CD4-positive, alpha-beta memory T cell (primary cell): ENCODE measurements at regions of chr11 and their contacts with region 1.

Region 1: DNA sequence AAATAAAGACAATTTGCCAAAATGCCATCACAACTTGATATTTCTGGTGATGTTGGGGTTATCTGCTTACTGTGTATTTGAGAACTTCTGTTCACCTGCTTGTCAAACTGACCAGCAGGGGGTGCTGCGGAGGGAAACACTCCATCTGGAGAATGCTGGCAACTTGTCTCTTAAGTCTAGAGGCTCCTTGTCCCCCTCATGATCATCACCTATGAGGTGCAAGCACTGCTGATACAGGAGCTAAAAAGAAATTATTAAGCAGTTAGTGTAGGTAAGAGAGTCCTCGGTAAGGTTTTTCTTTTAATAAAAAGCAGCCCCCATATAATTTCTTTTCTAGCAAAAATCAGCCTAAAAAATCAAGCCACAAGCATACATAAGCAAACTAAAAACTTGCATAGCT is 32.7 kb upstream of the GLYATL1B start:
- DNase-seq: peak; percentile 63 to 77 (median 71)
- H3K4me3 ChIP-seq: no peak overlapping the region
- H3K4me3 Mint-ChIP-seq: no peak overlapping the region
- H3K27ac ChIP-seq: no peak overlapping the region
- H3K27ac Mint-ChIP-seq: no peak overlapping the region
- H3K4me1 ChIP-seq: peaks cover 6% of the 10 kb centered on the region
- H3K4me1 Mint-ChIP-seq: peaks cover 4 to 7% (median 5%) of the 10 kb centered on the region in 4 donors
- H3K27me3 ChIP-seq: no peaks in the 10 kb centered on the region
- H3K27me3 Mint-ChIP-seq: peaks cover 14 to 25% of the 10 kb centered on the region in 2 donors

Region 2: GRCh38 chr11:58579192-58580129 is 473.9 kb before region 1 on chr11:
- CTCF ChIA-PET with region 1: no interaction called
- POLR2A ChIA-PET with region 1: no interaction called
- intact Hi-C with region 1: no loop called
- DNase-seq: peak; percentile 89 to 94 (median 90)
- H3K4me3 ChIP-seq: peak overlapping the region; percentile 63 to 81
- H3K4me3 Mint-ChIP-seq: peak overlapping the region; percentile 93 to 99 (median 98)
- H3K27ac ChIP-seq: peak overlapping the region; percentile 99
- H3K27ac Mint-ChIP-seq: peak overlapping the region; percentile 98 to 100 (median 100)
- H3K4me1 ChIP-seq: peaks cover 70% of the 10 kb centered on the region
- H3K4me1 Mint-ChIP-seq: peaks cover 37 to 86% (median 58%) of the 10 kb centered on the region in 4 donors
- H3K27me3 ChIP-seq: no peaks in the 10 kb centered on the region
- H3K27me3 Mint-ChIP-seq: peaks cover 0 to 3% of the 10 kb centered on the region in 2 donors

Region 3: GRCh38 chr11:59028105-59028504 is 25.3 kb before region 1 on chr11:
- CTCF ChIA-PET with region 1: no interaction called
- POLR2A ChIA-PET with region 1: no interaction called
- intact Hi-C with region 1: no loop called
- DNase-seq: no peak
- H3K4me3 ChIP-seq: no peak overlapping the region
- H3K4me3 Mint-ChIP-seq: no peak overlapping the region
- H3K27ac ChIP-seq: no peak overlapping the region
- H3K27ac Mint-ChIP-seq: no peak overlapping the region
- H3K4me1 ChIP-seq: no peaks in the 10 kb centered on the region
- H3K4me1 Mint-ChIP-seq: no peaks in the 10 kb centered on the region
- H3K27me3 ChIP-seq: no peaks in the 10 kb centered on the region
- H3K27me3 Mint-ChIP-seq: peaks cover 8 to 16% of the 10 kb centered on the region in 2 donors

Region 4: GRCh38 chr11:59152312-59152951 is 99.0 kb after region 1 on chr11:
- CTCF ChIA-PET with region 1: interaction called, 66 read pairs
- POLR2A ChIA-PET with region 1: no interaction called
- intact Hi-C with region 1: no loop called
- DNase-seq: peak in 1 of 5 donors; percentile 9
- H3K4me3 ChIP-seq: no peak overlapping the region
- H3K4me3 Mint-ChIP-seq: peak overlapping the region; percentile 66 to 85 (median 81)
- H3K27ac ChIP-seq: peak overlapping the region; percentile 31
- H3K27ac Mint-ChIP-seq: peak overlapping the region; percentile 43 to 88 (median 75)
- H3K4me1 ChIP-seq: peaks cover 21% of the 10 kb centered on the region
- H3K4me1 Mint-ChIP-seq: peaks cover 15 to 43% (median 22%) of the 10 kb centered on the region in 4 donors
- H3K27me3 ChIP-seq: no peaks in the 10 kb centered on the region
- H3K27me3 Mint-ChIP-seq: no peaks in the 10 kb centered on the region